ENCODE measurements at regions of chr2 and their contacts with region 1.

Region 1: DNA sequence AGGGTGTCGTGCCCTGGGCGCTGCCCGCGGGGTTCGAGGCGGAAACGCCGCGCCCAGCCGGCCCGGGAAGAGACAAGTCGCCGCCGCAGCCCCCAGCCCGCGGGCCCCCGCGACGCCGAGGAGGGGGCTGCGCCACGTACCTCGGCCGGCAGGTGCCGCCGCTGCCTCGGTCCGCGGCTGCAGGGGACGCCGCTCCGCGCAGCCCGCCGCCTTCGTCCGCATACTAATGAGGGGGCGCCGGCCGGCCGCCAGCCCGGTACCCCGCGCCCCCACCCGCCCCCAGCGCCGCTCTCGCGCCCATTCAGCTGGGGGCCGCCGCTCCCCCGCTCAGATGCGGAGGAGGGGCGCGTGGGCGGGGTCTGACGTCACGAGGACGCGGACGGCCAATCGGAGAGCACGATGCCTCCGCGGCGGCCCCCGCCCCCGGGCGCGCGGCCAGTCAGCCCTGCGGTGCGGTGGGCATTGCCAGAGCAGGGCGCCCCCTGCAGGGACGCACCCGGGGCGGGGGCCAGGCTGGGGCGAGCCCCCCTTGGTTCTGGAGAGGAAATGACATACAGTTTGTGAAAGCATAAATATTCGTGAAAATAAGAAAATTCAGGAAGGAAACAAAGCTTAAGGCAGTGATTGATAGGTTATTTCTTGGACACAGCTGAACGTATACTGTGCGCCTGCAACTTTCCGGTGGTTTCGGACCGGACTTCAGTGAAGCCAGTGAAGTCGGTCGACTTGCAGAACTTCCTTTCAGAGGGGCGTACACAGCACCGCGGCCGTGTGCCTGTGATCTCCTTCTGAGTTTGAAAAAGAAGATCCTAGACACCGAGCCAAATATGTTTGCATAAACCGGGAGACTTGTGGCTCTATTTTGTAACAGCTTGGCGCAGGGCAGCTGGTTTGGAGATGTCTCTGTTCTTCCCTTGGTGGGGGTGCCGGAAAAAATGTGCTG is at the start of gene ST3GAL5:
- DNase-seq: peak; percentile 83 to 91 (median 87)
- H3K4me3 ChIP-seq: peak within 1 kb of the TSS; percentile 82 to 84 (median 84)
- H3K4me3 Mint-ChIP-seq: peak within 1 kb of the TSS; percentile 93 to 98
- H3K27ac ChIP-seq: peak within 1 kb of the TSS; percentile 86 to 91
- H3K27ac Mint-ChIP-seq: peak within 1 kb of the TSS; percentile 88 to 98 (median 97)
- H3K4me1 ChIP-seq: peaks cover 55 to 69% of the 10 kb centered on the region in 2 donors
- H3K4me1 Mint-ChIP-seq: peaks cover 75% of the 10 kb centered on the region
- H3K27me3 ChIP-seq: no peaks in the 10 kb centered on the region
- H3K27me3 Mint-ChIP-seq: peaks cover 0 to 3% (median 0%) of the 10 kb centered on the region in 3 donors
- CTCF ChIP-seq: peak; percentile 85
- polyA plus RNA-seq, gene ST3GAL5: 14.0 to 51.2 (median 19.5) TPM

Region 2: GRCh38 chr2:85826990-85827878 is 61.7 kb before region 1 on chr2:
- intact Hi-C with region 1: no loop called
- DNase-seq: peak; percentile 47 to 65 (median 64)
- H3K4me3 ChIP-seq: peak overlapping the region in 1 of 3 experiments; percentile 42
- H3K4me3 Mint-ChIP-seq: peak overlapping the region; percentile 42 to 48
- H3K27ac ChIP-seq: no peak overlapping the region
- H3K27ac Mint-ChIP-seq: peak overlapping the region in 1 of 7 donors; percentile 46
- H3K4me1 ChIP-seq: peaks cover 2 to 5% of the 10 kb centered on the region in 2 donors
- H3K4me1 Mint-ChIP-seq: peaks cover 12% of the 10 kb centered on the region
- H3K27me3 ChIP-seq: no peaks in the 10 kb centered on the region
- H3K27me3 Mint-ChIP-seq: peaks cover 2 to 8% (median 3%) of the 10 kb centered on the region in 3 donors
- CTCF ChIP-seq: peak; percentile 92

Region 3: DNA sequence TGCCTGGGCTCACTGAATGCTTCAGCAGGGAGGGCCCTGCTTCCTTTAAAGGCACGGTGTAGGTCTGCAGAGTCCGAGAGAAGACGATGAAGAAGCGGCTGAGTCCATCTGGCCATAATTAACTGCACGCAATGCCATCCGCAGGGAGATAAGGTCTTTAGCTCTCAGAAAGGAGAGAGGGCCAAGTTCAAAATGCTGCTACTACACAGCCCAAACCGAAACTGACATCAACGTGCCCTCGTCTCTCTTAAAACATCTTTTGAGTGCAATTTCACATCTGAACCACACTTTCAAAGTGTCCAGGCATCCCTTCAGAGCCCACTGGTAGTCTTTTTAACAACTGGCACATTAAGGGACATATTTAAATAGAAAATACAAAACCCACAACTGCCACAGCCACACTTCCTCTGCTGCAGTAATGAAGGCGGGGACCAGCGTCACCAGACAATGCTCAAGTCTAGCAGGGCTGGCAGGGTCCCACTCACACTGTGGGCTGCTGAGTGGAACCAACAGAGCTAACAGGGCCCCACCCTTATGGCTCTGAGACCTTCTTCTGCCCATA is 35.9 kb before region 1 on chr2:
- intact Hi-C with region 1: loop called in 1 of 2 experiments (anchors 5 kb)
- DNase-seq: peak in 1 of 3 donors; percentile 13
- H3K4me3 ChIP-seq: peak overlapping the region in 1 of 3 experiments; percentile 61
- H3K4me3 Mint-ChIP-seq: peak overlapping the region; percentile 74 to 78
- H3K27ac ChIP-seq: peak overlapping the region; percentile 89 to 92
- H3K27ac Mint-ChIP-seq: peak overlapping the region; percentile 90 to 98 (median 95)
- H3K4me1 ChIP-seq: peaks cover 18 to 24% of the 10 kb centered on the region in 2 donors
- H3K4me1 Mint-ChIP-seq: peaks cover 24% of the 10 kb centered on the region
- H3K27me3 ChIP-seq: no peaks in the 10 kb centered on the region
- H3K27me3 Mint-ChIP-seq: no peaks in the 10 kb centered on the region
- CTCF ChIP-seq: no peak

Region 4: DNA sequence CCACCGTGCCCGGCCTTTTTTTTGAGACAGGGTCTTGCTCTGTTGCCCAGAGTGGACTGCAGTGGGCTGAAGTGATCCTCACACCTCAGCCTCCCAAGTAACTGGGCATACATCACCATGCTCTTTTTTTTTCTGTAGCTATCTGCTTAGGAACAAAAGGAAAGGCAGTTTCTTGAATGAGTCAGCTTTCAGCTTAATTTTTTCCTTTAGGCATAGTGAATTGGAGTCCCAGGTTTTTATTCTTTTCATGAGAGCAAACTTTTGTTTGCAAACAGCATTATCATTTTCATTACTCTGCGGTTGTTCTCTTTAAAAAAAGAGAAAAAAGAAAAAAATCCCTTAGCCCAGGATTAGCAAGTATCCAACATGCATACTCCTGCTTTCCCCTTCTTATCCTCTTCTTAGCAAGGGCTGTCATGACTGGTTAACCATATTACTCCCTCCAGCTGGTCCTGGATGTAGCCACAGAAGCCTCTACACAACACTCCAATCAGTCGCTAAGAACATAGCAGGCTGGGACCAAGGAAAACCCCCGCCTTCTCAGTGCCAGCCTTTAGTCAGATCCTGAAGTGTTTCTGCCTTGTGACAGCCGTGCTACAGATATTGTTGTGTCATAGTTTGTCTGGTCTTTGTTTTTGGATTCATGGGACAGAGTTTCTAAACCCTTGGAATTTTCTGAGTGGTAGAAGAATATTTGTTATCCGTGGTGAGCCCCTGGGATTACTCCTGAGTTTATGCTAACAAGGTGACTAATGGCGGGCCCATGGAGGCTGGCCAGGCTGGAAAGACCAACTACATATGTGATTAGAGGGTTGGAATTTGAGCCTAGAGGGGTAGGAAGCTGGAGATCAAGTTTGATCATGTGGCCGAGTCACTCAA is 23.1 kb after region 1 on chr2:
- intact Hi-C with region 1: no loop called
- DNase-seq: peak in 1 of 3 donors; percentile 12
- H3K4me3 ChIP-seq: no peak overlapping the region
- H3K4me3 Mint-ChIP-seq: no peak overlapping the region
- H3K27ac ChIP-seq: no peak overlapping the region
- H3K27ac Mint-ChIP-seq: peak overlapping the region in 3 of 7 donors; percentile 2 to 7 (median 7)
- H3K4me1 ChIP-seq: peaks cover 3 to 7% of the 10 kb centered on the region in 2 donors
- H3K4me1 Mint-ChIP-seq: peaks cover 6% of the 10 kb centered on the region
- H3K27me3 ChIP-seq: no peaks in the 10 kb centered on the region
- H3K27me3 Mint-ChIP-seq: peaks cover 0 to 7% (median 1%) of the 10 kb centered on the region in 3 donors
- CTCF ChIP-seq: no peak

Region 5: DNA sequence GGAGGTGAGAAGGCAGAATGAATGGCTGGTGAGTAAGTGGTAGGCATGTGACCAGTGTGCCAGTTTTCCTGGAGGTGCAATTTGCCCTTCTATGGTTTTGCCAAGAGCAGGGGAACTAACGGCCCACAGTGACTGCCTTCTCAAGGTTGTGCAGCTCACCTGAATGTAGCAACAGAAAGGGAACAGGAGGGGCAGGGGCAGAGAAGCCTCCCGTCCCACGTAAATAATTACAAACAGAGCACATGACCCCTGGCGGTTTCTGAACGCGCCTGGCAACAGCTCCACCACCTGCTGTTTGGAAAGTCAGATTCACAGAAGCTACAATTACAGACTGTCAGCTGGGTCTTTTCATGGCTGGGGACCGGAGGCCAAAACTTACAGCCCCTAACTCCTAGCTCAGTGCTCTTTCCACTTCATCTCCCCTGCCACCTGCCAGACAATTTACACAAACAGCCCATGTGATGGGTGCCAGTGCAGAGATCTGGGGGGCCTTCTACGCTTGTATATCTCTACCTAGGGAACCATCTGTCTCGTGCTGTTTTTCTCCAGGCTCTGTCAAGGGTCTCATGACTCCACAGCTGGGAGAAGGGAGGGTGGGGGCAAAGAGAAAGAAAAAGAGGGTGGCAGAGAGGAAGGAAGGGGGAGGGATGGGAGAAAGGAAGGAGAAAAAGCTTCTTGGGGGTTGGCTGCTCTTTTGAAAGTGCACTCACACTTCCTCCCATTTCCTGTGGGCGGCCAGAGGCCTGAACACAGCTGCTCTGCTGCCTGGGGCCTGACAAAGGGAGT is 147.1 kb after region 1 on chr2:
- intact Hi-C with region 1: loop called in 1 of 2 experiments (anchors 2 kb)
- DNase-seq: peak; percentile 71 to 76 (median 73)
- H3K4me3 ChIP-seq: peak overlapping the region in 1 of 3 experiments; percentile 44
- H3K4me3 Mint-ChIP-seq: peak overlapping the region; percentile 58 to 86
- H3K27ac ChIP-seq: peak overlapping the region; percentile 96
- H3K27ac Mint-ChIP-seq: peak overlapping the region; percentile 94 to 99 (median 97)
- H3K4me1 ChIP-seq: peaks cover 46 to 54% of the 10 kb centered on the region in 2 donors
- H3K4me1 Mint-ChIP-seq: peaks cover 59% of the 10 kb centered on the region
- H3K27me3 ChIP-seq: no peaks in the 10 kb centered on the region
- H3K27me3 Mint-ChIP-seq: peaks cover 0 to 3% (median 2%) of the 10 kb centered on the region in 3 donors
- CTCF ChIP-seq: no peak

Region 6: DNA sequence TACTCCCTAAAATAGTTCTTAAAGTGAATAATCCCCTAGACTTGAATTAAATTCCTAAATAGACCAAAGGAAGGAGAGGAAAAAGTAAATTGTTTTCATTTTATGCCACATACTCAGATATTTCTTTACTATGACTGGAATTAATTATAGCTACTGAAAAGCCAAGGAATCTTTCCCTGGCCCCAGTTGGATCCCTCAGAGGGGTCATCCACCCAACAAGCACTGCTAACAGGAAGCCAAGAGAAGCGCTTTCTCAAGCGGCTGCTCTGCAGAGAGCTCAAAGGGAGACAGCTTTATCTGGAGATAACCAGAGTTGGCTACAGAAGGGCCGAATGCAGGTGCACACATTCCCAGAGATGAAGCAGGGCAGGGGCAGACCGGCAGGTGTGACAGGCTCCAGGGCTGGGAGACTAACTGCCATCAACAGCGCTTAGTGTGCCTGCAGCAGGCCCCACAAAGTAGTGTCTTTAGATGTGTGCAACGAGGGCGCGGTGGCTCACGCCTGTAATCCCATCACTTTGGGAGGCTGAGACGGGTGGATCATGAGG is 165.7 kb after region 1 on chr2:
- intact Hi-C with region 1: no loop called
- DNase-seq: no peak
- H3K4me3 ChIP-seq: no peak overlapping the region
- H3K4me3 Mint-ChIP-seq: no peak overlapping the region
- H3K27ac ChIP-seq: no peak overlapping the region
- H3K27ac Mint-ChIP-seq: peak overlapping the region in 2 of 7 donors; percentile 50 to 52
- H3K4me1 ChIP-seq: peaks cover 9 to 11% of the 10 kb centered on the region in 2 donors
- H3K4me1 Mint-ChIP-seq: peaks cover 9% of the 10 kb centered on the region
- H3K27me3 ChIP-seq: no peaks in the 10 kb centered on the region
- H3K27me3 Mint-ChIP-seq: no peaks in the 10 kb centered on the region
- CTCF ChIP-seq: no peak

Region 7: GRCh38 chr2:86079981-86080911 is 191.3 kb after region 1 on chr2:
- intact Hi-C with region 1: loop called (anchors 5 kb)
- DNase-seq: peak; percentile 75 to 79 (median 77)
- H3K4me3 ChIP-seq: no peak overlapping the region
- H3K4me3 Mint-ChIP-seq: peak overlapping the region in 1 of 2 donors; percentile 60
- H3K27ac ChIP-seq: peak overlapping the region; percentile 43 to 76
- H3K27ac Mint-ChIP-seq: peak overlapping the region; percentile 95 to 98 (median 98)
- H3K4me1 ChIP-seq: peaks cover 15 to 16% of the 10 kb centered on the region in 2 donors
- H3K4me1 Mint-ChIP-seq: peaks cover 20% of the 10 kb centered on the region
- H3K27me3 ChIP-seq: no peaks in the 10 kb centered on the region
- H3K27me3 Mint-ChIP-seq: peaks cover 0 to 2% (median 0%) of the 10 kb centered on the region in 3 donors
- CTCF ChIP-seq: peak; percentile 85

Measured in CD14-positive monocyte (primary cell).